ENCODE measurements at regions of chr9 and their contacts with region 1.

Region 1: DNA sequence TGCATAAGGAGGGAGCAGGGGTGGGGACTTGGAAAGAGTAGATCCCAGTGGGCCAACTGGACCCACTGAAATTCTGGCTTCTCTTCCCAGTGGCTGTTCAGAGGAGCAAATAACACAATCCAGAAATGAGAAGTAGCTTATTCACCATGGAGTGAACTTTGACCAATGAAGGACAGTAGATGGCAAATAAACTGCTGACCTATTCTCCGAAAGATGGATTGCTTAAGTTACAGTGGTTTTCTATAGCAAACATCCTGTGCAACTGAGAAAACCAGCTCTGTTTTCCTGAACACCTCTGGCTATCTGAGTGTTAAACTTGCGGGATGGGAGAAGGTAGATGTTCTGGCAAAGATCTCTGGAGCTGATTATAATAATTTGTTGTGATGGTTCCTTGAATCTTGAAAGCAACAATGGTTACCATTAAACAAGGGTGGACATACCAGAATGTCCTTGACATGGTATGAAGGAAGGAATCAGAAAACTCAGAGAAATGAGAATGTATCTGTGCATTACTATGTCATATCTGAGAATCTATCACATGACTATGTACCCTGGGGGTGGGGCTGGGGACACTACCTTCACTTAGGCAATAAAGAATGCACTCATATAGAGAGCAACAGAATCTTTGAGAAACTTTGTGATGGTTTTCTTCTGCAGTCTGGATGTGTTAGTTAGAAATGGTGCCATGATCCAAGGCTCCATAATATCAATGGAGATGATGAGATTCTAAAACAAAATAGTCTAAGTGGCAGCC is 325.3 kb downstream of the SPATA31D1 start:
- DNase-seq: no peak
- H3K4me3 ChIP-seq: no peak overlapping the region
- H3K27ac ChIP-seq: no peak overlapping the region
- H3K4me1 ChIP-seq: no peaks in the 10 kb centered on the region
- H3K27me3 ChIP-seq: no peaks in the 10 kb centered on the region
- CTCF ChIP-seq: no peak
- EP300 ChIP-seq: no peak
- POLR2A ChIP-seq: no peak

Region 2: GRCh38 chr9:81759668-81760215 is 554.1 kb before region 1 on chr9:
- intact Hi-C with region 1: no loop called
- DNase-seq: no peak
- H3K4me3 ChIP-seq: no peak overlapping the region
- H3K27ac ChIP-seq: no peak overlapping the region
- H3K4me1 ChIP-seq: no peaks in the 10 kb centered on the region
- H3K27me3 ChIP-seq: no peaks in the 10 kb centered on the region
- CTCF ChIP-seq: no peak
- EP300 ChIP-seq: no peak
- POLR2A ChIP-seq: no peak

Region 3: DNA sequence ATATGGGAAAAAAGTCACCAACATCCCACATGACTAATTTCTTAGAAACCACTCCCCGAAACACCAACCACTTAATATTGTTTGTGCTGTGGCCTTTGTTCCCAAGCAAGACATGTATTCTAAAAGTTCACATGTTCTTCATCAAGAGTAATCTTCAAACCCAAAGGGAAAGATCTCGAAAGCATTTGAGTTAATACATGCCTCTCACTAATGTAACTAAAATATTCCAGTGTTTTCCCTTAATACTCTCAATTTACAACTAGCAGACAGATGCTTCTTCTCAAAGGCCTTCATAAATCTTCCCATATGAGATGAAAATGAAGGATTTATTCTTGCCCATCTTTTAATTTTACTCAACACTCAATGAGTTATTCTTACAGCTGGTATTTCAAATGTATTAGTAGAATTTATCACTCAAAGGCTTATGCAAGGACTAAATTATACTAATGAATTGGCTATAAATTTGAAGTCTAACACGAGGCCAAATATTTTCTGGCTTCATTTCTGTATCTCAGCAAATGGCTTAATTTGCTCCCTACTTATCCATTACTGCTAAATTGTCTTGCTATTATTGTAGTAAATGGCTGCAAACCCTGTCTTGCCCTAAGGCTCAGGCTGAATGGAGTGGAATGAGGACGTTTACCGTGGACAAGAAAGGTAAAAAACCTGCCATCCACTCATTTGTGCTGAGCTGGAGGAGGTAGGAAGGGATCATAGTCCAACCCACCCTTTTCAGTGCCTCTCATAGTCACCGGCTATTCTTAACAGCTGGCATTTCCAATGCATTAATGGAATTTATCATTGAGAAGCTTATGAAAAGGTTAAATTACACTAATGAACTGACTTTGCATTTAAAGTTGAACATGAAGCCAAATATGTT is 274.7 kb after region 1 on chr9:
- intact Hi-C with region 1: loop called in 1 of 4 experiments (anchors 5 kb)
- DNase-seq: no peak
- H3K4me3 ChIP-seq: no peak overlapping the region
- H3K27ac ChIP-seq: no peak overlapping the region
- H3K4me1 ChIP-seq: no peaks in the 10 kb centered on the region
- H3K27me3 ChIP-seq: no peaks in the 10 kb centered on the region
- CTCF ChIP-seq: no peak
- EP300 ChIP-seq: no peak
- POLR2A ChIP-seq: no peak